ENCODE measurements at regions of chr18 and their contacts with region 1.

Region 1: DNA sequence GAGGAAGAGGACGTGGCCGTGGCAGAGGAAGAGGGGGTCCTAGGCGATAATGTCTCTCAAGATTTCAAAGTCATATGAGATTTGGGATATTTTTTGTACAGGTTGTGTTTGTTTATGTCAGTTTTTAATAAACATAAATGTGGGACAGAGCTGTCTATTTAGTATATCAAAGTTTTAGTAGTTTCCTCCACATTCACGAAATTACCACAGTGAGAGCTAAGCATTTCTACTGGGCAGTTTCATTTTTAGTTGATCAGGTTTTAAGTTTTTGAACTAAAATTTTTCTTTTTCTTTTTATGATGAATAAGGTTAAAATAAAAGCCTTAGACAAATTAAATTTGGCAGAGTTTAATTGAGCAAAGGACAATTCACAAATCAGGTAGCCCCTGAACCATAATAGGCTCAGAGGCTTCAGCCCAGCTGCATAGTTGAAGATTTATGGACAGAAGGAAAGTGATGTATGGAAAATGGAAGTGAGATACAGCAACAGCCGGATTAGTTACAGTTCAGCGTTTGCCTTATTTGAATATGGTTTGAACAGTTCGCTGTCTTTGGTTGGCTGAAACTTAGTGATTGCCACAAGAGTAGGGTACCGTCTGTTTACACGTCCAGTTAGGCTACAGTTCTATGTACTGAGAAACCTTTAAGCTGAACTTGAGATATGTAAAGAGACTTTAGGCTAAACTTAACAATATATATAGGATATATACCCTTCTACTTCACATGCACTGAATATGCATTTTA is 17.1 kb downstream of the SNRPD1 start:
- DNase-seq: no peak
- H3K4me3 ChIP-seq: no peak overlapping the region
- H3K27ac ChIP-seq: no peak overlapping the region
- H3K4me1 ChIP-seq: no peaks in the 10 kb centered on the region
- H3K27me3 ChIP-seq: no peaks in the 10 kb centered on the region
- CTCF ChIP-seq: no peak

Region 2: GRCh38 chr18:21686282-21687105 is 57.2 kb after region 1 on chr18:
- CTCF ChIA-PET with region 1: no interaction called
- POLR2A ChIA-PET with region 1: interaction called, 12 read pairs
- intact Hi-C with region 1: no loop called
- DNase-seq: peak in 1 of 2 experiments; percentile 35
- H3K4me3 ChIP-seq: no peak overlapping the region
- H3K27ac ChIP-seq: 0 out of 2 replicates have a peak overlapping the region, but pooled peaks have one; percentile 32
- H3K4me1 ChIP-seq: peaks cover 11% of the 10 kb centered on the region
- H3K27me3 ChIP-seq: no peaks in the 10 kb centered on the region
- CTCF ChIP-seq: no peak

Measured in PC-9 (cell line).